ENCODE measurements at regions of chr17 and their contacts with region 1.

Region 1: DNA sequence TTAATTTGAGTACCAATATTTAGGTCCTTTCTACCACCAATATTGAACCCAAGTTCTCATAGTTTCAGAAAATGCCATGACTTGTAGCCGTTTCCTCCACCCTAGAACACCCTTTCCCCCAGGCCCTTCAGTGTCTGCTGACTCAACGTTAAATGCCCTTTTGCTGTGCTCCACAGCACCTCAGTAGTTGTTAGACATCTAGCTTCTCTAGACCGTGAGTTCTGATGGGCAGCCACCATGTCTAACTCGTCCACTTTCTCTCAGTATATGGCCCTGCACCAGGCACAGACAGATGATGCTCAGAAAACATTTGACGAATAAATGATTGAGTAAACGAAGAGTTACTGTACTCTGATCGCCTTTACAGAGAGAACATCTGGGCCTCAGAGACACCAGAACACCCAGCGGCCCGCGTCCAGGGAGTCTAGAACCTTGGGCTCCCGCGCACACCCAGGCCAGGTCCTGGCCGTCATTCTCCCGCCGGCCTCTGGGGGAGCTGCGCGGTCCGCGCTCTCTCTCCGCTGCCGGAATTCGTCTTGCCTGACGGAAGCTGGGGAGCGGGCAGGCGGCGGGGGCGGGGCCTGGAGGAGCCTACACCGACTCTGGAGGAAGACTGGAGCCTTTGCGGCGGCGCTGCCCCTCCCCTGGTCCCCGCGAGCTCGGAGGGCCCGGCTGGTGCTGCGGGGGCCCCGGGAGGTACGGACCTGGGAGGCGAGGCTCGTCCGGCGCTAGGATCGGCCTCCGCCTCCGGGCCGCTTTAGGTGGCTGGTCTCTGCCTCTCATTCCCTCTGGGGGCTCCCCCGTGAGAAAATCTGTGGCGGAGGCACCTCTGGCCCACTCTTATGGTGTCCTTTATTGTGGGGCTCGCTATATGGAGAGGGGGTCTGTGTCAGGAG is at the start of gene NKIRAS2:
- DNase-seq: peak; percentile 95
- ATAC-seq: peak; percentile 79
- H3K4me3 Mint-ChIP-seq: peak within 1 kb of the TSS; percentile 98
- H3K27ac Mint-ChIP-seq: peak within 1 kb of the TSS; percentile 86
- H3K4me1 Mint-ChIP-seq: peaks cover 52% of the 10 kb centered on the region
- H3K27me3 Mint-ChIP-seq: no peaks in the 10 kb centered on the region
- total RNA-seq, gene NKIRAS2: 25.7 to 26.2 TPM

Region 2: GRCh38 chr17:41772218-41772585 is 247.6 kb before region 1 on chr17:
- CTCF ChIA-PET with region 1: no interaction called
- POLR2A ChIA-PET with region 1: no interaction called
- DNase-seq: no peak
- ATAC-seq: no peak
- H3K4me3 Mint-ChIP-seq: no peak overlapping the region
- H3K27ac Mint-ChIP-seq: no peak overlapping the region
- H3K4me1 Mint-ChIP-seq: peaks cover 5% of the 10 kb centered on the region
- H3K27me3 Mint-ChIP-seq: no peaks in the 10 kb centered on the region

Region 3: GRCh38 chr17:41870627-41871026 is 149.1 kb before region 1 on chr17:
- CTCF ChIA-PET with region 1: no interaction called
- POLR2A ChIA-PET with region 1: no interaction called
- DNase-seq: no peak
- ATAC-seq: no peak
- H3K4me3 Mint-ChIP-seq: no peak overlapping the region
- H3K27ac Mint-ChIP-seq: no peak overlapping the region
- H3K4me1 Mint-ChIP-seq: peaks cover 8% of the 10 kb centered on the region
- H3K27me3 Mint-ChIP-seq: no peaks in the 10 kb centered on the region

Region 4: GRCh38 chr17:41966463-41967140 is 53.2 kb before region 1 on chr17 and contains the start of gene CNP:
- CTCF ChIA-PET with region 1: interaction called, 32 read pairs
- POLR2A ChIA-PET with region 1: interaction called, 60 read pairs
- DNase-seq: peak; percentile 93
- ATAC-seq: peak; percentile 83
- H3K4me3 Mint-ChIP-seq: peak within 1 kb of the TSS; percentile 83
- H3K27ac Mint-ChIP-seq: peak within 1 kb of the TSS; percentile 83
- H3K4me1 Mint-ChIP-seq: peaks cover 47% of the 10 kb centered on the region
- H3K27me3 Mint-ChIP-seq: no peaks in the 10 kb centered on the region
- total RNA-seq, gene CNP: 93.4 to 94.6 TPM

Region 5: DNA sequence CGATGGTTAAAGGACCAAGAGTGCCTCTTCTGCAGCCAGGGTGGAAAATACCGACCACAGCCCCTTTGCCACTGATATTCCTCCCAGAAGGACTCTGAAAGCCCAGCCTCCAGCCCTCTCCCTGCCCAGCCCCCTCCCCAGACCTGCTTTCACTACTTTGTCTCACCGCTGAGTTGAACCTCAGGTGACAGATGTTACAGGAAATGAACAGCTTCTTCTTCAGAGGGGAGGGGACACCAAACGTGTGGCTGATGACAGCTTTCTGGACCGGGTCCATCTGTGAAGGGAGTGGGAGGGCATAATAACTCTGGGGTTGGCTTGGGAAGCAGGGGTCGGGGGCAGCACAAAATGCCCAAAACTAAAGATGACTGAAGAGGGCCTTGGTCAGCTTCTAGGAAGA is 14.3 kb after region 1 on chr17:
- CTCF ChIA-PET with region 1: interaction called, 43 read pairs
- POLR2A ChIA-PET with region 1: interaction called, 3 read pairs
- DNase-seq: peak; percentile 39
- ATAC-seq: peak; percentile 30
- H3K4me3 Mint-ChIP-seq: no peak overlapping the region
- H3K27ac Mint-ChIP-seq: no peak overlapping the region
- H3K4me1 Mint-ChIP-seq: peaks cover 8% of the 10 kb centered on the region
- H3K27me3 Mint-ChIP-seq: peaks cover 4% of the 10 kb centered on the region

Region 6: GRCh38 chr17:42101513-42102319 is 82.0 kb after region 1 on chr17:
- CTCF ChIA-PET with region 1: interaction called, 168 read pairs
- POLR2A ChIA-PET with region 1: interaction called, 6 read pairs
- DNase-seq: peak; percentile 75
- ATAC-seq: peak; percentile 66
- H3K4me3 Mint-ChIP-seq: no peak overlapping the region
- H3K27ac Mint-ChIP-seq: no peak overlapping the region
- H3K4me1 Mint-ChIP-seq: peaks cover 13% of the 10 kb centered on the region
- H3K27me3 Mint-ChIP-seq: peaks cover 14% of the 10 kb centered on the region

Region 7: GRCh38 chr17:42120770-42121769 is 101.3 kb after region 1 on chr17 and contains the start of gene KAT2A:
- CTCF ChIA-PET with region 1: interaction called, 168 read pairs
- POLR2A ChIA-PET with region 1: interaction called, 30 read pairs
- DNase-seq: peak; percentile 83
- ATAC-seq: peak; percentile 92
- H3K4me3 Mint-ChIP-seq: peak within 1 kb of the TSS; percentile 73
- H3K27ac Mint-ChIP-seq: peak within 1 kb of the TSS; percentile 54
- H3K4me1 Mint-ChIP-seq: peaks cover 33% of the 10 kb centered on the region
- H3K27me3 Mint-ChIP-seq: no peaks in the 10 kb centered on the region
- total RNA-seq, gene KAT2A: 45.2 to 46.8 TPM